ENCODE measurements at regions of chr5 and their contacts with region 1.

Region 1: GRCh38 chr5:134289509-134290113 is 63.7 kb upstream of the PPP2CA start:
- DNase-seq: peak; percentile 63
- H3K4me3 ChIP-seq: no peak overlapping the region
- H3K27ac ChIP-seq: no peak overlapping the region
- H3K4me1 ChIP-seq: no peaks in the 10 kb centered on the region
- H3K27me3 ChIP-seq: no peaks in the 10 kb centered on the region
- CTCF ChIP-seq: peak; percentile 49 to 71 (median 62)
- POLR2A ChIP-seq: no peak

Region 2: DNA sequence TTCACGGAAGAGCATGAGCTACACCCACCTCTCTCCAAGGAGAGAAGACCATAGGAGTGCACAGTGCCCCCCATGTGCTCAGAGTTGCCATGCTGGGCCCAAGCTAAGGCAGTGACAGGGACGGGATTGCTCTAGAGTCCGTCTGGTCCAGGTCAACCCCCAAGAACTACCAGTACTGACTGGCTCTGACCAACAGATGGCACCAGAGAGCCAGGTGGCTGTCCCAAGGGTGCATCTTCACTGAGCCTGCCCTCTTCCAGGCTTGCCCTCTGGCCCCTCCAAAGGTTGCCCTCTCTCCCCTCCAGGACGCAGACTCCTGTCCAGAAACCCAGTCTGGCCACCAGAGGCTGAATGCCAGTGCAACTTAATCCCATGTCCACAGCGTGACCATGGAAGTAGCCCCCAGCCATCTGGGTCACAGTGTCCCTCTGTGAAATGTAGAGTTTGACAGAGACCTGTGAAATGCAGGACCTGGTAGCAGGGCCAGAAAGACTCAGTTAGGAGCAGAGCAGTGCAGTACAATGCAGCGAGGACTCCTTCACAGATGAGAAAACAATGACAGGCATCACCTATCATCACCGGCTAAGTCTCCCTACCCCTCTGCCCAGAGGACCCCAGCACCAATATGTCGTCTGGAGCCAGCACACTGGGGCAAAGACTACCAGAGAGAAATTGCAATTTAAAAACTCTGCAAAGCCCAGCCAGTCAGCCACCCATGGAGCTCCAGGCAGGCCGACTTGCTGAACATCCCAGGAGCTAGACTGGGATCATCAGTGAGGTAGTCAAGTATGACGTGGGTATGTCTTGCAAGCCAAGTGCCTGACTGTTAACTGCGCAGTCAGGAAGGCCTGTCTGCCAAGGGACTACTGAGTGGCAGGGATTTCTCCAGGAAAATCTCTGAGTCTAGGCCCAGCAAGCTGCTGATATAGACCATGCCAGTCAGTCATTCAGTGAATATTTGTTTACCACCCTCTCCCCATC is 105.2 kb before region 1 on chr5:
- intact Hi-C with region 1: loop called (anchors 5 kb)
- DNase-seq: peak; percentile 67
- H3K4me3 ChIP-seq: no peak overlapping the region
- H3K27ac ChIP-seq: no peak overlapping the region
- H3K4me1 ChIP-seq: peaks cover 4% of the 10 kb centered on the region
- H3K27me3 ChIP-seq: no peaks in the 10 kb centered on the region
- CTCF ChIP-seq: peak; percentile 70 to 78 (median 75)
- POLR2A ChIP-seq: no peak

Measured in testis (tissue), 5 donors.